HAP-1 (cell line): ENCODE measurements at regions of chrX and their contacts with region 1.

Region 1: GRCh38 chrX:136953867-136954787 is 73.6 kb upstream of the RBMX start:
- DNase-seq: peak; percentile 81 to 90
- H3K4me3 ChIP-seq: no peak overlapping the region
- H3K4me1 ChIP-seq: no peaks in the 10 kb centered on the region
- H3K27me3 ChIP-seq: no peaks in the 10 kb centered on the region

Region 2: GRCh38 chrX:137051978-137052642 is 98.0 kb after region 1 on chrX:
- in situ Hi-C with region 1: loop called (anchors 5 kb)
- DNase-seq: peak; percentile 76 to 93
- H3K4me3 ChIP-seq: peak overlapping the region; percentile 27
- H3K4me1 ChIP-seq: peaks cover 3% of the 10 kb centered on the region
- H3K27me3 ChIP-seq: peaks cover 42% of the 10 kb centered on the region

Region 3: DNA sequence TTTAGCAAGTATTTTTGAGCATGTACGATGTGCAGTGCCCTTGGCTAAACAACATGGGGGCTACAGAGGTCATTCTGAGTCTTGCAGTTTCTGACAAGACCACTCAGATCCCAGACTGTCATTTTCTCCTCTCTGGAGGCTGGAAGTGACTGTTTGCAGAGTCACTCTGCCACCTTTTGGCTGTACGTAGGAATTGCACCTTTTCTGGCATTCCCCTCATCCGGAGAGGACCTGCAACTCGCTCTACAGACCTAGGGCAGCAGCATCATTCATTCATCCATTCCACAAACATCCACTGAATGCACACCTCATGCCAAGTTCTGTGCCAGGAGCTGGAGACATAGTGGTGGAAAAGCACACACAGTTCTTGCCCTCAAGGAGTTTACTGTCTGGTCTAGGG is 240.0 kb after region 1 on chrX:
- in situ Hi-C with region 1: loop called (anchors 10 kb)
- DNase-seq: peak; percentile 55 to 68
- H3K4me3 ChIP-seq: no peak overlapping the region
- H3K4me1 ChIP-seq: no peaks in the 10 kb centered on the region
- H3K27me3 ChIP-seq: peaks cover 4% of the 10 kb centered on the region; the same call in 1 of the 2 replicates